AG04449 (cell line): ENCODE measurements at regions of chr17 and their contacts with region 1.

Region 1: GRCh38 chr17:43483674-43484372 is at the start of gene DHX8:
- DNase-seq: peak; percentile 98
- H3K4me3 ChIP-seq: peak within 1 kb of the TSS; percentile 96
- CTCF ChIP-seq: peak; percentile 100

Region 2: GRCh38 chr17:43367737-43368242 is 116.0 kb before region 1 on chr17:
- CTCF ChIA-PET with region 1: interaction called, 37 read pairs
- POLR2A ChIA-PET with region 1: interaction called, 29 read pairs
- DNase-seq: no peak
- H3K4me3 ChIP-seq: peak overlapping the region; percentile 46
- CTCF ChIP-seq: no peak

Region 3: GRCh38 chr17:43388359-43389045 is 95.3 kb before region 1 on chr17:
- CTCF ChIA-PET with region 1: interaction called, 1,137 read pairs
- POLR2A ChIA-PET with region 1: interaction called, 16 read pairs
- DNase-seq: no peak
- H3K4me3 ChIP-seq: peak overlapping the region; percentile 65
- CTCF ChIP-seq: no peak

Region 4: DNA sequence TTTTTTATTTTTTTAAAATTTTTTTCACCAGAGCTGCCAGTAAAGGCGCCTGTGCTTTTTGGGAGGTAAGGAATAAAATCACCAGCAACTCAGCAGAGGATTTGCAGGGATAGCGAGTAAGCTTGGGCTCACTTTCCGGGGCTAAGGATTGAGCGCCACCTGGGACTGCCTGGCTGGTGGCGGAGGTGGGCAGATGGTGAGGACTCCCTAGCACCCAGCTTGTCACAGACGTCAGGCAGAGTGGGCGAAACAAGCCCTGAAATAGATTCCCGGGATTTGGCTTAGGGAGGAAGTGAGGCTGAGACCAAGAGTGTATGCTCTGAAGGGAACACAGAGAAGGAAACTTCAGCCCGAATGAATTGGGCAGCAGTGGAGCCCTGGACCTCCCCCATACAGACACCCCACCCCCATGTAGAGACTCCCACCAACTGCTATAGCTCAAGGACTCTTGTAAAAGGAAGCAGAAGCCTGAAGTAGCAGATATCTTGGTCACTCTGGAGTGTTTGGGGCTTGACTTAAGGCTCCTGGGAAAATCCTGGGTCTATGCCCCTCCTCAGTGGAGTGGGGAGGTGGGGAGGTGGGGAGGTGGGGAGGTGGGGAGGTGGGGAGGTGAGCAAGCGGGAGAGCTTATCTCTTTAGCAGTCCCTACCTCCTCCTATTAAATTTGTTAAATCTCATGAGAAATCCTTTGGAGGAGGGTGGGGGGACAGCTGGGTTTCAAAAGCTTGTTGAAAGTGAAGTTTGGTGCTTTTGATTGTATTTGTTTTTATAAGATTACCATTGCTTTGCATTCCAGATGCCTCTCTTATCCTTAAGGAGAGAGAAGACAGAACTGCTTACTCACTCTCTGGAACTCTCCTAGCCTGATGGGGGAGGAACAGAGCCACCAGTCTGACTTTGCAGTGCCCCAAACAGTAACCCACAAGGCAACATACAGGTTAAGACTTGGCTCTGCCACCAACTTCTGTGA is 76.9 kb before region 1 on chr17:
- CTCF ChIA-PET with region 1: interaction called, 1,137 read pairs
- POLR2A ChIA-PET with region 1: interaction called, 6 read pairs
- DNase-seq: no peak
- H3K4me3 ChIP-seq: no peak overlapping the region
- CTCF ChIP-seq: no peak

Region 5: GRCh38 chr17:43418441-43419374 is 65.1 kb before region 1 on chr17:
- CTCF ChIA-PET with region 1: interaction called, 21 read pairs
- POLR2A ChIA-PET with region 1: interaction called, 3 read pairs
- DNase-seq: peak; percentile 74
- H3K4me3 ChIP-seq: peak overlapping the region; percentile 20; the same call in 1 of the 2 replicates
- CTCF ChIP-seq: peak; percentile 19

Region 6: GRCh38 chr17:43467981-43468581 is 15.7 kb before region 1 on chr17:
- CTCF ChIA-PET with region 1: interaction called, 27 read pairs
- POLR2A ChIA-PET with region 1: interaction called, 13 read pairs
- DNase-seq: peak; percentile 92
- H3K4me3 ChIP-seq: no peak overlapping the region
- CTCF ChIP-seq: no peak